H1 (cell line): ENCODE measurements at regions of chr1 and their contacts with region 1.

Region 1: GRCh38 chr1:202192770-202193613 is 607 bp upstream of the LGR6 start:
- DNase-seq: peak in 1 of 2 experiments; percentile 92
- H3K4me3 ChIP-seq: peak overlapping the region in 3 of 4 experiments; percentile 34 to 65 (median 40); a peak in 5 of 8 replicates
- H3K27ac ChIP-seq: no peak overlapping the region
- H3K4me1 ChIP-seq: peaks cover 0 to 9% (median 2%) of the 10 kb centered on the region in 4 experiments; a peak in 5 of 7 replicates
- H3K27me3 ChIP-seq: peaks cover 16 to 31% (median 22%) of the 10 kb centered on the region in 4 experiments
- CTCF ChIP-seq: peak; percentile 93 to 97 (median 96)
- EP300 ChIP-seq: no peak
- POLR2A ChIP-seq: no peak
- RAD21 ChIP-seq: peak; percentile 81 to 86

Region 2: DNA sequence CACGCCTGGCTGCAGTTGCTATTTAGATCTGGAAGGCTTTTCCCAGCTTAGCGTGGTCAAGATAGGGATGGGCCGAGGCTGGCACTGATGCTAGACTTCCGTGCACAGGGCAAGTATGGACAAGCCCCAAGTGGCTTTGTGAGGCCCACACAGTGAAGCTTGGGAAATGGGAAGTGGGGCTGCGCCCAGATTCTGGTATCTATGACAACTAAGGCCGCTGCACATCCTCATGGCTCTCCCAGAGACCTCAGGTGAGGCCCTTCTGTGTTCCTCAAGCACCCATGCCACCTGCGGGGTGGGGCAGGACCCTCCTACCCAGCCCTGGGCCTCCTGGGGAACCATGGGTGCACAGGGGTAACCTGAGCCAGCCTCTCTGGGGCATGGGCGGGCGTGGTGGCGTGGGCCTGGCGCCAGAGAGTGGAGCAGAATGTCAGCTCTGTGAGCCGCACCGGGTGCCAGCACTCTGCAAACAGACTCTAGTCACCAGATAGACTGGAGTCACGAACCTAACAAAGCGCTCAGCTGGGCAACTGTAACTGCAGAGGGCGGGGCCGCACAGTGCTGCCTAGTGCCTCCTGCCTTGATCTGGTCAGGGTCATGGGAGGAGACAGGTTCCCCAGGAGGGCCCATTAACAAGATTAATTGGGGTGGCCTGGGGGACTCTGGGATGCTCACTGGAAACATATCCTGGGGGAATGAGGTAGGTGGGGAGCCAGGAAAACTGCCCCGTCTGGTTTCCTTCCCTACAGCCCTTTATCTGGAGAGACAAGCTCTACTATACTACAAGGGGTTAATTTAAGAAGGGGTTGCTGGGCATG is 136.1 kb before region 1 on chr1:
- CTCF ChIA-PET with region 1: no interaction called
- POLR2A ChIA-PET with region 1: no interaction called
- DNase-seq: no peak
- H3K4me3 ChIP-seq: no peak overlapping the region
- H3K27ac ChIP-seq: no peak overlapping the region
- H3K4me1 ChIP-seq: no peaks in the 10 kb centered on the region; a peak in 1 of 7 replicates
- H3K27me3 ChIP-seq: no peaks in the 10 kb centered on the region
- CTCF ChIP-seq: no peak
- EP300 ChIP-seq: no peak
- POLR2A ChIP-seq: no peak
- RAD21 ChIP-seq: no peak

Region 3: GRCh38 chr1:202176949-202177927 is 15.8 kb before region 1 on chr1:
- CTCF ChIA-PET with region 1: interaction called, 74 read pairs
- POLR2A ChIA-PET with region 1: no interaction called
- DNase-seq: no peak
- H3K4me3 ChIP-seq: no peak overlapping the region
- H3K27ac ChIP-seq: no peak overlapping the region
- H3K4me1 ChIP-seq: no peaks in the 10 kb centered on the region; a peak in 1 of 7 replicates
- H3K27me3 ChIP-seq: no peaks in the 10 kb centered on the region
- CTCF ChIP-seq: peak; percentile 41 to 51 (median 44)
- EP300 ChIP-seq: no peak
- POLR2A ChIP-seq: no peak
- RAD21 ChIP-seq: peak in 1 of 2 experiments; percentile 27; a peak in 1 of 4 replicates

Region 4: DNA sequence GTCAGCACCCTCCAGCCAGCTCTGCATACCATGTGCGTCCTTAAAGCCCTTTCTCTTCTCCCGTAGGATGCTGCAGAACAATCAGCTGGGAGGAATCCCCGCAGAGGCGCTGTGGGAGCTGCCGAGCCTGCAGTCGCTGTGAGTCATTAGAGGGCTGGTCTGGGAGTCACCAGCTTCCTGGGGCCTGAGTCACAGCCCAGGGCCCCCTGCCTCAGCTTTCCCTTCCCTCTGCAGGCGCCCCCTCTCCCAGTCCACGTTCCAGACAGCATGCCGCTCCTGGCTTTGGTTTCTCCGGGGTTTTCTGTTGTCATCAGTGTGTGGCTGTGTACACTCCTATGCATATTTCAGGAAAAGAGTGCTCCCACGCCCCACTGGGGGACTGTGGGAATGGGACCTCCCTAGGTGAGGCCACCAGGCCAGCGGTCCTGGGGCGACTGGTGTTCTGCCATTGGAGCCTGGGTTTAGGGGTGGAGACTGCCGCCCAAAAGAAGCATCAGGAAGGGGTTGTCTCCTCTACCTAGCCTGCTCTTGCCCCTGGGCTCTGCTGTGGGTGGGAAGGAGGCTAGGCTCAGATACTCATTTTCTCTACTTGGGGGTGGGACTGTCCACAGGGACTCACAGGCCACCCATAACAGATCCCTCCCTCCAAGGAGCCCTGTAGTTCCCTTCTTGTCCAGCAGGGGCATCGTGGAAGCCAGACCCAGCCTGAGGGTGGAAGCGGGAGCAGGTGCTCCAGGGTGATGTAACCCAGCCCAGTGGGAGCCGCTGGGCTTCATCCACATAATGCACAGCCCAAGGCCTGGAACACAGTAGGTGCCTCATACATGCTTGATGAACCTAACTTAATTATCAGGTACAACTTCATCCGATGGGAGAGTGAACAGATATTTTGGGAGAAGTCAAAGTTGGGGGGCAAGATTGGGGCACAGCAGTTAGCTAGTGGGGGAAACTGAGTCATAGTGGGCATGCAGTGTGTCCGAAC is 43.2 kb after region 1 on chr1:
- CTCF ChIA-PET with region 1: interaction called, 10 read pairs
- POLR2A ChIA-PET with region 1: interaction called, 3 read pairs
- DNase-seq: peak; percentile 81 to 97
- H3K4me3 ChIP-seq: no peak overlapping the region
- H3K27ac ChIP-seq: no peak overlapping the region
- H3K4me1 ChIP-seq: peaks cover 0 to 18% (median 10%) of the 10 kb centered on the region in 4 experiments; a peak in 6 of 7 replicates
- H3K27me3 ChIP-seq: no peaks in the 10 kb centered on the region
- CTCF ChIP-seq: peak; percentile 81 to 97 (median 97)
- EP300 ChIP-seq: no peak; a peak in 1 of 3 replicates
- POLR2A ChIP-seq: no peak
- RAD21 ChIP-seq: peak; percentile 37 to 57; a peak in 3 of 4 replicates

Region 5: DNA sequence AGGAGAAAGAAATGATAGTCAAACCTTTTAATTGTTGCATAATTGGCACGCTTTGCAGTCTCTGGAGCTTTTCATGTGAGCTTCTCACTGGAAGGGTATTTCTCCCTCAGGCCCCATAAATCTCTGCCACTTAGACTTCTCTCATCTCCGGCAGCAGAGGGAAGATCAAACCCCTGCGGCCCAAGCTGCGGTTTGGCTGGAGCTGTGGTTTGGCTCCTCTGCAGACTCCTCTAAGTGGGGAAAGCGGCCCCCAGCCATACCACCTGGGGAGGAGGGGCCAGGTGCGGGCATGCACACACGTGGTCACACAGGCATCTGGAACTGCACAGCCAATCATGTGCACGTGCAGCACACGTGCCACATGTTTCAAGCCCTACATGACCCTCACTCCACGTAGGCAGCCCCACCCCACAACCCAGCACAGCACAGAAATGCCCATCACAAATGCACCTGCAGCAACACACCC is 90.4 kb after region 1 on chr1:
- CTCF ChIA-PET with region 1: interaction called, 11 read pairs
- POLR2A ChIA-PET with region 1: no interaction called
- DNase-seq: no peak
- H3K4me3 ChIP-seq: no peak overlapping the region
- H3K27ac ChIP-seq: no peak overlapping the region
- H3K4me1 ChIP-seq: peaks cover 1 to 11% (median 5%) of the 10 kb centered on the region in 4 experiments; a peak in 4 of 7 replicates
- H3K27me3 ChIP-seq: no peaks in the 10 kb centered on the region
- CTCF ChIP-seq: no peak
- EP300 ChIP-seq: no peak
- POLR2A ChIP-seq: no peak
- RAD21 ChIP-seq: no peak

Region 6: DNA sequence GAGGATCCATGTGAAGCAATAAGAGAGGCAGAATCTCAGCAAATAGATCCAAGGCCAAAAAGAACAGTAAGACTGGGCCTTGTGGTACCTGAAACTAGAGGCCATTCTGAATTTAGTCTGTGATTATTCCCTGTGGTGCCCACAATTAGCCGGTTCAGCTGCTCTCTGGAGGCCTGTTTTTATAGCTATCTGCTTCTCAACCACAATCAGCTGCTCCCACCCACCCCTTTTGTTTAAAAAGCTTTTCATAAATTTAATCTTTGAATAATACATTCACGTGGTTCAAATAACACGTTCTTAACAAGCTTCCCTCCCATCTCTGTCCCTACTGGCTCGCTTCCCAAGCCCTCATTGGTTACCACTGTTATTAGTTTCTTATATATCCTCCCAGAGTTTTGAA is 130.7 kb after region 1 on chr1:
- CTCF ChIA-PET with region 1: interaction called, 107 read pairs
- POLR2A ChIA-PET with region 1: no interaction called
- DNase-seq: no peak
- H3K4me3 ChIP-seq: no peak overlapping the region
- H3K27ac ChIP-seq: no peak overlapping the region
- H3K4me1 ChIP-seq: no peaks in the 10 kb centered on the region
- H3K27me3 ChIP-seq: no peaks in the 10 kb centered on the region
- CTCF ChIP-seq: no peak
- EP300 ChIP-seq: no peak
- POLR2A ChIP-seq: no peak
- RAD21 ChIP-seq: no peak